Esophagus muscularis mucosa (tissue), 4 donors: ENCODE measurements at regions of chr12 and their contacts with region 1.

Region 1: DNA sequence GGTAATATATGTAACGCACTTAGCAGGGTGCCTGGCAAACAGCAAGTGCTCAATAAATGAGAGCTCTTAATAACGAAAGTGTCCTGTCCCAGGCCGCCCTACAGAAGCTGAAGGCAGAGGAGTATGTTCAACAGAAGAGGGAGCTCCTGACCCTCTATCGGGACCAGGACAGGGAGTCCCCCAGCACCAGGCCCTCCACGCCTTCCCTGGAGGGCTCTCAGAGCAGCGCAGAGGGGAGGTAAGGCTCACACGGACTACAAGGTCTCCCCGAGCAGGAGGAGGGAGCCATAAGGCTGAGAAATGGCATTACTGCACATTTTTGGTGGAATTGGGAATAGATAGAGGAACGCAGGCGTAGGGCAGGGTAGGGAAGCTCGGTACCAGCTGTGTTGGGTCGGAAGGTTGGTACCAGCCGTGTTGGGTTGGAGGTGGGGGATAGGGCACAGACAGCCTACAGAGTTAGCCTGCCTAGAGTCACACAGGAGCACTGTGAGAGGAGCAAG is 15.5 kb downstream of the TNFRSF1A start:
- DNase-seq: no peak
- H3K4me3 ChIP-seq: peak overlapping the region in 2 of 4 donors; percentile 22 to 40
- H3K27ac ChIP-seq: peak overlapping the region; percentile 63 to 99 (median 86)
- H3K4me1 ChIP-seq: peaks cover 73 to 96% (median 93%) of the 10 kb centered on the region in 4 donors
- H3K27me3 ChIP-seq: no peaks in the 10 kb centered on the region
- CTCF ChIP-seq: peak; percentile 56 to 74 (median 70)
- EP300 ChIP-seq: no peak
- POLR2A ChIP-seq: no peak

Region 2: GRCh38 chr12:6205144-6205539 is 121.2 kb before region 1 on chr12:
- intact Hi-C with region 1: no loop called
- DNase-seq: no peak
- H3K4me3 ChIP-seq: peak overlapping the region; percentile 25 to 99 (median 70)
- H3K27ac ChIP-seq: peak overlapping the region; percentile 94 to 100 (median 98)
- H3K4me1 ChIP-seq: peaks cover 71 to 93% (median 90%) of the 10 kb centered on the region in 4 donors
- H3K27me3 ChIP-seq: no peaks in the 10 kb centered on the region
- CTCF ChIP-seq: no peak
- EP300 ChIP-seq: no peak
- POLR2A ChIP-seq: no peak

Region 3: DNA sequence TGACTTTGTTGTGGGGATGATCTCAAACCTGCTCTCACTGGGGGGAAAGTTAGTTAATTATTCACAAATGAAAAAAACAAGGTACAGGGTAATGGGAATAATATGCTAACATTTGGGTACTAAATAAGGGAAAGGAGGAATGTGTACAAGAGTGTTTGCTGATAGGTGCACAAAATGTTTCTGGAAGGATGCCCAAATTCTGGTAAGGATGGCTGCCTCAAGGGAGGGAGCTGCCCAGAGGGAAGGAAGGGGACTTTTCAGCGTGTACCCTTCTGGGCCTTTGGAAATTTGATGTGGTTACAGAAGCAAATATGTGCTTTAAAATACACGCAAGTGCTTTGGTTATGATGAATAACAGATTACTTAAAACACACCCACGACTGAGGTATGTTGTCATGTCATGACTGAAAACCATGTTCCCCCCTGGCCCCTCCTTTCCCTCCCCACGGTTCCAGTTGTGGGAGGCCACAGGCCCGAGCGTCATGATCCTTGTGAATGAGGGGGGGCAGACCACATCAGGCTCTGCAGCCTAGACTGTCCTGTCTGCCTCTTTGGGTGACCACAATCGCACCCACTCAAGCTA is 59.2 kb before region 1 on chr12:
- intact Hi-C with region 1: no loop called
- DNase-seq: no peak
- H3K4me3 ChIP-seq: no peak overlapping the region
- H3K27ac ChIP-seq: peak overlapping the region; percentile 79 to 84 (median 81)
- H3K4me1 ChIP-seq: peaks cover 0 to 52% (median 43%) of the 10 kb centered on the region in 4 donors
- H3K27me3 ChIP-seq: no peaks in the 10 kb centered on the region
- CTCF ChIP-seq: no peak
- EP300 ChIP-seq: peak; percentile 25
- POLR2A ChIP-seq: no peak

Region 4: DNA sequence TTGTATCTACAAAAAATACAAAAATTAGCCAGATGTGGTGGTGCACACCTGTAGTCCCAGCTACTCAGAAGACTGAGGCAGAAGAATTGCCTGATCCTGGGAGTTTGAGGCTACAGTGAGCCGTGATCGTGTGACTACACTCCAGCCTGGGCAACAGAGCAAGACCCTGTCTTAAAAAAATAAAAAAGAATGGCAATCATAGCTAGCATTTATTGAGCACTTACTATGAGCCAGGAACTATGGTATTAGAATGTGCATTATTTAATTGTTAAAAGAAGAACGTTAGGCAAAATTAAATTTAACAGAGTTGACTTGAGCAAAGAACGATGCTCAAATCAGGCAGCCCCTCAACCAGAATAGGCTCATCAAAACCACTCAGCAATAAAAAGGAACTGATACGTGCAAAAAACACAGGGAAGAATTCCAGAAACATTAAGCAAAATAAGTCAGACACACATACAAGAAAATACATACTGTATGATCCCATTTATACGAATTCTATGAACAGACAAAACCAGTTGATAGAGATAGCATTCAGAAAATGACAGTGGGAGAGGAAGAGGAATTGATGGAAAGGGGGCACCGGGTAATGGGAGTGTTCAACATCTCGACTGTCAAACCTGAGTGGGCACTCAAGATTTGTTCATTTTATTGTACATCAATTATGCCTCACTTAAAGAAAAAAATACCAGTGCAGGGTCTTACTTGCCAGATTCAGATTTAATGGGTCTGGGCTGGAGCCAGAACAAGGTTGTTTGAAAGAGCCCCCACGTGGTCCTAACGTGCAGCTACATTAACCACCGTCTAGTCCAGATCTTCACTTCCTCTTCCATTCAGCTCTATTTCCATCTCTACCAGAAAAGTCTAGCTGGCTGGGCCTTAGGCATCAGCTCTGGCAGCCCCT is 40.9 kb after region 1 on chr12:
- intact Hi-C with region 1: loop called (anchors 5 kb)
- DNase-seq: no peak
- H3K4me3 ChIP-seq: no peak overlapping the region
- H3K27ac ChIP-seq: no peak overlapping the region
- H3K4me1 ChIP-seq: peaks cover 15 to 40% (median 29%) of the 10 kb centered on the region in 4 donors
- H3K27me3 ChIP-seq: no peaks in the 10 kb centered on the region
- CTCF ChIP-seq: peak; percentile 9 to 38 (median 16)
- EP300 ChIP-seq: no peak
- POLR2A ChIP-seq: no peak

Region 5: DNA sequence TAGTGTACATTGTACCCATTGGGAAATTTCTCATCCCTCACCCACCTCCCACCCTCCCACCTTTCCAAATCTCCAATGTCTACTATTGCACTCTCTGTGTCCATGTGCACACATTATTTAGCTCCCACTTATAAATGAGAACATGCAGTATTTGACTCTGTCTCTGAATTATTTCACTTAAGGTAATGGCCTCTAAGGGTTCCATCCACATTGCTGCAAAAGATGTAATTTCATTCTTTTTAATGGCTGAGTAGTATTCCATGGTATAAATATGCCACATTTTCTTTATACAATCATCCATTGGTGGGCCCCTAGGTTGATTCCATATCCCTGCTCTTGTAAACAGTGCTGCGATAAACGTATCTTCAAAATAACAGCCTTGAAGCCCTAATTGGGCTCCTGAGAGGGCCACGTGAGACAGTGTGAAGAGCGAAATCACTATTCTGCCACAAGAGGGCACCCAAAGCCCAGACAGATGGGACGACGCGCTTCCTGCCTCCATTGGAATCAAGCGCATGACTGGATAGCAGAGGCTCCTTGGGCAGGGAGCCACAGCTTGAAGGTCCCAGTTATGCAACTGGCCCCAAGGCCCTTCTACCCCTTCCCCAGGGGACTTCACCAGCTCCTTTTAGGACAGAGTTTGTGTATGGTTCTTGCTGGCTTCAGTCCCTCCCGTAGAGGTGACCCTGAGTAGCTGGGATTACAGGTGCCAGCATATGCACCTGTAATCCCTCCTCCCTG is 97.0 kb after region 1 on chr12:
- intact Hi-C with region 1: loop called (anchors 2 kb)
- DNase-seq: no peak
- H3K4me3 ChIP-seq: no peak overlapping the region
- H3K27ac ChIP-seq: peak overlapping the region; percentile 10 to 73 (median 43)
- H3K4me1 ChIP-seq: peaks cover 0 to 24% (median 18%) of the 10 kb centered on the region in 4 donors
- H3K27me3 ChIP-seq: no peaks in the 10 kb centered on the region
- CTCF ChIP-seq: peak; percentile 89 to 97 (median 89)
- EP300 ChIP-seq: no peak
- POLR2A ChIP-seq: no peak

Region 6: DNA sequence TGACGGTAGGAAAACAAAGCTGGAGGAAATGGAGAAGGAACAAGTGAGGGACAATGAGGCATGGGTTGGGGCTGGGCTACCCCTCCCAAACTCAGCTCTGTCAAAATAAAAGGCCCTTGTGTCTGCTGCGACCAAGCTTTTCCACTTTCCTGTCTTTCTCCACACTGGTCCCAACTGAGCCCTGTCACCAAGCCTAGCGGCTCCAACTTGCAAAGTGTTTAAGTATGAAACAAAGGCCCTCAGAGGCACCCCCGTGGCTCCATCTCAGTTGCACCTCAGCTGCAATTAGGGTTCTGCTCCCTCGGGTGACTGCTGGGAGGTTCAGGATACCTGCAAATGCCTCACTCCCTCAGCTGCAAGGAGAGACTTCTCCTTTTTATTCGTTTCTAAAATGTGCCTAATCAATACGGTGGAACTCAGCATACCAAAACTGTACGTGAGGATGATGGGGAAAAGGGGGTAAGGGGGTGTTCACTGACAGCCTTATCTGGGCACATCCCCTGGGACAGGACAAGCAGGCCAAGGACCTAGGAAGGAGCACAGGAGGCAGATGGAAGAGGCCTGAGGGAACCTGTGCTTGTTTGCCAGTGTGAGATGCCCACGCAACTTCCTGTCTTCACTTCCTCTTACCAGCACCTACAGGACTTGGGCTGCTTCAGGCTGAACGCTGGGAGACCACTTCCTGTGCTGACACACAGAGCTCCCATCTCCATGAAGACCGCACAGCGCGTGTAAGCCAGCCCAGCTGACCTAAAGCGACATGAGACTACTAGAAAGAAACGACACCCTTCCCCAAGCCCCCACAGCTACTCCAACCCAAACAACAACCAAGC is 135.2 kb after region 1 on chr12:
- intact Hi-C with region 1: loop called (anchors 5 kb)
- DNase-seq: no peak
- H3K4me3 ChIP-seq: no peak overlapping the region
- H3K27ac ChIP-seq: peak overlapping the region; percentile 28 to 57 (median 46)
- H3K4me1 ChIP-seq: peaks cover 16 to 37% (median 31%) of the 10 kb centered on the region in 4 donors
- H3K27me3 ChIP-seq: no peaks in the 10 kb centered on the region
- CTCF ChIP-seq: no peak
- EP300 ChIP-seq: no peak
- POLR2A ChIP-seq: no peak